Activated naive CD4-positive, alpha-beta T cell treated with anti-CD3 and anti-CD28 coated beads for 36 hours (primary cell): ENCODE measurements at regions of chr10 and their contacts with region 1.

Region 1: GRCh38 chr10:69957886-69958555 is 94.6 kb upstream of the MACROH2A2 start:
- DNase-seq: peak; percentile 40
- H3K4me3 Mint-ChIP-seq: no peak overlapping the region
- H3K27ac Mint-ChIP-seq: no peak overlapping the region
- H3K4me1 Mint-ChIP-seq: no peaks in the 10 kb centered on the region
- H3K27me3 Mint-ChIP-seq: peaks cover 3% of the 10 kb centered on the region

Region 2: GRCh38 chr10:69644658-69645295 is 313.2 kb before region 1 on chr10:
- CTCF ChIA-PET with region 1: no interaction called
- intact Hi-C with region 1: loop called (anchors 1 kb)
- DNase-seq: peak; percentile 63
- H3K4me3 Mint-ChIP-seq: no peak overlapping the region
- H3K27ac Mint-ChIP-seq: no peak overlapping the region
- H3K4me1 Mint-ChIP-seq: no peaks in the 10 kb centered on the region
- H3K27me3 Mint-ChIP-seq: peaks cover 1% of the 10 kb centered on the region

Region 3: GRCh38 chr10:69786791-69787190 is 171.2 kb before region 1 on chr10:
- CTCF ChIA-PET with region 1: interaction called, 4 read pairs
- intact Hi-C with region 1: loop called (anchors 5 kb)
- DNase-seq: no peak
- H3K4me3 Mint-ChIP-seq: no peak overlapping the region
- H3K27ac Mint-ChIP-seq: no peak overlapping the region
- H3K4me1 Mint-ChIP-seq: no peaks in the 10 kb centered on the region
- H3K27me3 Mint-ChIP-seq: no peaks in the 10 kb centered on the region